Caco-2 (cell line): ENCODE measurements at regions of chr5 and their contacts with region 1.

Region 1: DNA sequence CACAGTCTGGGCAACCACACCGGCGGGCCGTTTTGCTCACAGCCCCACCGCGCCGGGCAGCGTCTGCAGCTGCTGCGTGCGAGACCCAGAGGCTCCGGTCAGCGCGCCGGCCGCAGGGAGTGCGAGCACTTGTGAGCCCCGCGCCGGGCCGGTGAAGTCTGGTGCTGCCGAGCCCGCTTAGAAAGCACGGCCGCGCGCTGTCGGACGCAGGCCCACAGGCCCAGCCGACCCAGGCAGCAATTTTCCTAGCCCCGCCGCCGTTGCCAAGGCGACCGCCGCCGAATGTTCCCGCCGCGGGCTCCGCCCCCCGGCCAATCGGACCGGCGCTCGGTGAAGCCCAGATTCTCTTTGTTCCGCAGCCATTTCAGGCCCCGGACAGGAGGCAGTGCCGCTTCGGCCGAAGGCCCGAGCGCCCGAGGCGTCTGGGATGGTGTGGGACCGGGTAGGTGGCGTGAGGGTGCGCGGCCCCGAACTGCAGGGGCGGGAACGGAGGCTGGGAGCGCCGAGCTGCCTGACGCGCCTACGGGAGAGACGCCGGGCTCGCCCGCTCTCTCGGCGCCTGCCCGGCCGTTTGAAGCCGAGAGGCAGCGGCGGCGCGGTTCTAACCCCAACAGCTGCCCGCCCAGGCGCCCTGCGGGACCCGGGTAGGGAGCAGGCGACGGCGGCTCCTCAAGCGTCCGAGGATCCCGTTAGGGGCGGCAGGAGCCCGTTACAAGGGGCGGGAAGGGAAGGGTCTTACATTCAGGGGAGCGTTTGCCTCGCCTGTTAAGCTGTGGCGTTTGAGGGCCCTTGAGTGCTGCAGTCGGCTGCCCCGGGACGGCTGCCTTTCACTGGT is at the start of gene TNPO1:
- DNase-seq: peak; percentile 91 to 95
- H3K4me3 ChIP-seq: peak within 1 kb of the TSS; percentile 91
- H3K4me3 Mint-ChIP-seq: peak within 1 kb of the TSS; percentile 98
- H3K27ac Mint-ChIP-seq: peak within 1 kb of the TSS; percentile 91
- H3K4me1 ChIP-seq: peaks cover 15% of the 10 kb centered on the region
- H3K4me1 Mint-ChIP-seq: peaks cover 11% of the 10 kb centered on the region
- H3K27me3 ChIP-seq: no peaks in the 10 kb centered on the region
- H3K27me3 Mint-ChIP-seq: peaks cover 7% of the 10 kb centered on the region
- CTCF ChIP-seq: no peak
- total RNA-seq, gene TNPO1: 148 TPM in 2 replicates

Region 2: DNA sequence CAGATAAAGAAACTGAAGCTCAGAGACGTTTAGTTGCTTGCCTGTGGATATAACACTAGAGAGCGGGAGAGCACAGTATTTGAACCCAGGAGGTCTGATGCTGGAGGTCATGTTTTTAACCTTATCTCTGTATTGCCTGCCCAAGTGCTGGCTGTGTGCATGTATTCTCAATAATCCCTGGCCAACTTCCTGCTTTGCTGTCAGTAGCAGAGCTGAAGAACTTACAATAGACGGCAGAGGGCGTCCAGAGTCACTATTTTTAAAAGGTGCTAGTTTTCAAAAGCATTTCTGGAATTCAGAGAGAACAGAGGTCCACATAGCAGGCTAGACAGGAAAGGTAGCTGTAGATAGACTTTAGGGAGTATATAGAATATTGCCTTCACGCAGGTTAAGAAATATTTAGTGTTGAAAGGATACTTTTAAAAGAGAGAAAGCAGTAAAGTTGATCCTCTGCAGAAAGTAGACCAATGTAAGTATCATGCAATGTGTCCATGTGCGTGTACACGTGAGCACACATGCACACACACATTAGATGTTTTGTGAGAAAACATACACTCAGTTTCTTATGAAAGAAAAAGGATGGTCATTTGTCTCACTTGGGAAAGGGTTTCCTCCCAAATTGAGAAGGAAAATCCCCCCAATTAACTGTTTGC is 450.1 kb before region 1 on chr5:
- CTCF ChIA-PET with region 1: interaction called, 5 read pairs
- POLR2A ChIA-PET with region 1: no interaction called
- intact Hi-C with region 1: loop called (anchors 1 kb)
- DNase-seq: peak; percentile 73 to 76
- H3K4me3 ChIP-seq: no peak overlapping the region
- H3K4me3 Mint-ChIP-seq: no peak overlapping the region
- H3K27ac Mint-ChIP-seq: no peak overlapping the region
- H3K4me1 ChIP-seq: peaks cover 12% of the 10 kb centered on the region; the same call in 1 of the 2 replicates
- H3K4me1 Mint-ChIP-seq: no peaks in the 10 kb centered on the region
- H3K27me3 ChIP-seq: no peaks in the 10 kb centered on the region
- H3K27me3 Mint-ChIP-seq: no peaks in the 10 kb centered on the region
- CTCF ChIP-seq: peak; percentile 64 to 76

Region 3: DNA sequence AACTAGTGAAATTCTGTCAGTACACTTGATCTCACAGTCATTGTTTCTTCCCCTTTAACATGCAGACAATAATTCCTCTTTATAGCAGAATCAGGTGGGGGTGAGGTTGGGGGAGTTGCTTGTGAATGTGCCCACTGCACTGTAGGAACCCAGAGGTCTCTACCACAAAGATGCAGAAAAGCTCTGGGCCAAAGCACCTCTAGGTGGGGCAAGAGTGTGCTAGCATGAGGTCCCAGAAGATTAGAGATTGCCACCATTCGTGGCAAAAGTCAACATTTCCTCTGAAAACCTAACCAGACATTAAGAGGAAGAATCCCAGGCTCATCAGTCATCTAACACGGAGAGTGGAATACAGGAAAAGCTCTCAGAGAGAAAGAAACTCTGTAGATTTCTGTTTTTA is 421.8 kb before region 1 on chr5:
- CTCF ChIA-PET with region 1: no interaction called
- POLR2A ChIA-PET with region 1: no interaction called
- intact Hi-C with region 1: loop called (anchors 2 kb)
- DNase-seq: peak in 1 of 2 experiments; percentile 31
- H3K4me3 ChIP-seq: no peak overlapping the region
- H3K4me3 Mint-ChIP-seq: no peak overlapping the region
- H3K27ac Mint-ChIP-seq: no peak overlapping the region
- H3K4me1 ChIP-seq: no peaks in the 10 kb centered on the region
- H3K4me1 Mint-ChIP-seq: no peaks in the 10 kb centered on the region
- H3K27me3 ChIP-seq: no peaks in the 10 kb centered on the region
- H3K27me3 Mint-ChIP-seq: peaks cover 8% of the 10 kb centered on the region
- CTCF ChIP-seq: peak; percentile 26 to 71

Region 4: DNA sequence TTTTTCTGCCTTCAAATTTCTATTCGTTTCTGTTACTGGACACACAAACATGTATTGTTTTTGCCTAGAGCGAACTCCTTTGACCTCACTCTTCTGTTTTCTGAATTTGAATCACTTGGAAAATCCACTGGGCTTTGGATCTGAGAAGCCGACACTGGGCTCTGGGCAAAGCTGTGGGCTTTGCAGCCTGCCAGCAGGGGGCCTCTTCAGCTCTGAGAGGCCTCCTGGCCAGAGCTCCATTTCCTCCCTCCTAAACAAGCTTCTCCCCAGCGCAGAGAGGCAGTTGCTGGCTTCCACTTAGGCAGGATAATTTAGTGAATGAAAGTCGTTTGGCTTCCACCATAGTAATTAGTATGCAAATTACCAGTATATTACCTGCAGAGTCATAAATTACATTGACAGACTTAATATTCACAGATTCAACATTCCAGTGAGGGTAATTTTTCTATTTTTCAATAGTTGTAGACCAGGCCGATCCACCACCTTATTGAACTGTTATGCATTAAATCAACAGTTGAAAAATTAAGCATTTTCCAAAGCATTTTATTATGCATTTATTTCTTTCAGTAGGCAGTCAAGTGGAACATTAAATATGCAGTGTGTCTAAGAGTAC is 205.3 kb before region 1 on chr5:
- CTCF ChIA-PET with region 1: interaction called, 53 read pairs
- POLR2A ChIA-PET with region 1: interaction called, 3 read pairs
- intact Hi-C with region 1: loop called (anchors 1 kb)
- DNase-seq: peak; percentile 63 to 73
- H3K4me3 ChIP-seq: no peak overlapping the region
- H3K4me3 Mint-ChIP-seq: no peak overlapping the region
- H3K27ac Mint-ChIP-seq: no peak overlapping the region
- H3K4me1 ChIP-seq: no peaks in the 10 kb centered on the region
- H3K4me1 Mint-ChIP-seq: peaks cover 5% of the 10 kb centered on the region
- H3K27me3 ChIP-seq: no peaks in the 10 kb centered on the region
- H3K27me3 Mint-ChIP-seq: peaks cover 2% of the 10 kb centered on the region
- CTCF ChIP-seq: peak; percentile 92 to 98

Region 5: DNA sequence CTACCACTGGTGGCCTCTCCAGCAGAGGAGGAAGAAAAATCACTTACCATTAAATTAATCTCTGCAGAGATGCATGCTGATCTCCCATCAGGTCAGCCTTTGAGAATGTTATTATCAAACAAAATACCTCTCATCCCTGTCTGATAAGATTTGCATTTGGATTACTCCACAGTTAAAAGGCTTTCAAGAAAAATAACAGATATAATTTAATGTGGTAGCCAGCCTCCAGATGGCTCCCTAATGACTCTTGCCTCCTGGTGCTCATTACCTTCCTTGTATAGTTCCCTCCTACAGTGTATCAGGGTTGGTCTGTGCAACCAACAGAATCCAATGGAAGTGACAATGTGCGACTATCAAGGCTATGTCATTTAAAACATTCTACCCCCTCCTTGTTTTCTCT is 63.6 kb before region 1 on chr5:
- CTCF ChIA-PET with region 1: no interaction called
- POLR2A ChIA-PET with region 1: no interaction called
- intact Hi-C with region 1: loop called (anchors 1 kb)
- DNase-seq: no peak
- H3K4me3 ChIP-seq: no peak overlapping the region
- H3K4me3 Mint-ChIP-seq: no peak overlapping the region
- H3K27ac Mint-ChIP-seq: no peak overlapping the region
- H3K4me1 ChIP-seq: no peaks in the 10 kb centered on the region
- H3K4me1 Mint-ChIP-seq: no peaks in the 10 kb centered on the region
- H3K27me3 ChIP-seq: no peaks in the 10 kb centered on the region
- H3K27me3 Mint-ChIP-seq: no peaks in the 10 kb centered on the region
- CTCF ChIP-seq: peak in 1 of 2 experiments; percentile 3

Region 6: GRCh38 chr5:72788866-72789505 is 27.5 kb before region 1 on chr5:
- CTCF ChIA-PET with region 1: no interaction called
- POLR2A ChIA-PET with region 1: no interaction called
- intact Hi-C with region 1: loop called (anchors 1 kb)
- DNase-seq: peak; percentile 22 to 31
- H3K4me3 ChIP-seq: no peak overlapping the region
- H3K4me3 Mint-ChIP-seq: no peak overlapping the region
- H3K27ac Mint-ChIP-seq: peak overlapping the region; percentile 49
- H3K4me1 ChIP-seq: peaks cover 22% of the 10 kb centered on the region
- H3K4me1 Mint-ChIP-seq: peaks cover 18% of the 10 kb centered on the region
- H3K27me3 ChIP-seq: no peaks in the 10 kb centered on the region
- H3K27me3 Mint-ChIP-seq: no peaks in the 10 kb centered on the region
- CTCF ChIP-seq: no peak

Region 7: DNA sequence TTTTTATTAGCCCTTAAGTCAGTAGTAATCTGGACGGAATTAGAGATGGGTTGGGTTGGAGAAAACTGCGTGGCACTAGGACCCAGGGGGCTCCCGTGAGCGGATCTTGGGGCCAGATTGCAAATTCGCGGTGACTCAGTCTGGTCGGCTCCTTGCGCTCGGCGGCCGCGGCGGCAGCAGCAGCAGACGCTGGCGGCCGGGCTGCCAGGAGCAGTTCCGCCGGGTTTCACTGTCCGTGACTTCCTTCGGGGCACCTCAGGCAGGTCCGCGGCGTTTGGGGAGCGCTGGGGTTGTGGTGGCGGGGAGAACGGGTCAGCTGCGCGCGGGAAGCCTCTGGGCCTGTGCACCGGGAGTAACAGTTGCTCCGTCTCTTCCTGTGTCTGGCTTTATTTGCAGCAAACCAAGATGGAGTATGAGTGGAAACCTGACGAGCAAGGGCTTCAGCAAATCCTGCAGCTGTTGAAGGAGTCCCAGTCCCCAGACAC is 31.5 kb after region 1 on chr5:
- CTCF ChIA-PET with region 1: no interaction called
- POLR2A ChIA-PET with region 1: no interaction called
- intact Hi-C with region 1: loop called (anchors 1 kb)
- DNase-seq: peak; percentile 89 to 91
- H3K4me3 ChIP-seq: peak overlapping the region; percentile 62
- H3K4me3 Mint-ChIP-seq: peak overlapping the region; percentile 98
- H3K27ac Mint-ChIP-seq: peak overlapping the region; percentile 94
- H3K4me1 ChIP-seq: no peaks in the 10 kb centered on the region; the same call in 1 of the 2 replicates
- H3K4me1 Mint-ChIP-seq: peaks cover 15% of the 10 kb centered on the region
- H3K27me3 ChIP-seq: no peaks in the 10 kb centered on the region
- H3K27me3 Mint-ChIP-seq: no peaks in the 10 kb centered on the region
- CTCF ChIP-seq: peak in 1 of 2 experiments; percentile 22